Mammary epithelial cell (primary cell): ENCODE measurements at regions of chr9 and their contacts with region 1.

Region 1: DNA sequence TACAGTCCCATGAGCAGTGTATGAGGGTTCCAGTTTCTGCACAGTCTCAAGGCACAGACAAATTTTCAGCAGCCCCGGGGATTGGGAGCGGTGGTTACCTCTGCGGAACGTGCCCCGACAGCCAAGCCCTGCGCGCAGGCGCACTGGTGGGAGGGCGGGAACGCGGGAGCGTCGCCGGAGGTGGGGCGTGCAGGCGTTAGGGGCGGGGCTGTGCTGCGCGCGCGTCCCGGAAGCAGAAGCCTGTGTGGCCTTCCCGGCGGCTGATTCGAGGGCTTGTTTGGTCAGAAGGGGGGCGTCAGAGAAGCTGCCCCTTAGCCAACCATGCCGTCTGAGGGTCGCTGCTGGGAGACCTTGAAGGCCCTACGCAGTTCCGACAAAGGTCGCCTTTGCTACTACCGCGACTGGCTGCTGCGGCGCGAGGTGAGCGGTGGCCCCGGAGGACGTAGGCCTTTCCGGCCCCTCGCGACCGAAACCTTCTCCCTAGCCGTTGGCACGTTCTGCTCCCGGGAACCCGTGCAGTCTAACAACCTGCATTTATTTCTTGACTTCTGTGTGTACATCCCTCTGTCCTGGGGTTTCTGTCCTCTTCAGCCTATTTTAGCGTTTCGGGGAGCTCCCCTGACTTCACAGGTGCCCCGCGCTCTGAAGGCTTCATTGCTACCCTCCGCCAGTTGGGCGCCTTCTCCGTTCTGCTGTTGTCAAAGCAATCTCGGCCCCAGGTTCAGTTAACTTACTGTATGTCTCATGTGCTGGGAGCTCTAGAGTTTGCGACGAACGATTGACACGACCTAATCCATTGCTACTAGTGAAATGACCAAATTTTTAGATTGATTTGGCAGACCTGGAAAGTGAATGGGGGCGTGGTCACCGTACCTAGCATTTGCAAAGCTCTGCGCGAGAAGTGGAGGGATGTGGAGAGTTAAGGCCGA is at the start of gene GLE1:
- DNase-seq: peak; percentile 90
- H3K4me3 ChIP-seq: peak within 1 kb of the TSS; percentile 86 to 95 (median 91)
- H3K27ac ChIP-seq: peak within 1 kb of the TSS; percentile 83
- H3K4me1 ChIP-seq: peaks cover 27% of the 10 kb centered on the region
- H3K27me3 ChIP-seq: no peaks in the 10 kb centered on the region
- CTCF ChIP-seq: no peak
- total RNA-seq, gene GLE1: 19.7 to 28.8 TPM

Region 2: DNA sequence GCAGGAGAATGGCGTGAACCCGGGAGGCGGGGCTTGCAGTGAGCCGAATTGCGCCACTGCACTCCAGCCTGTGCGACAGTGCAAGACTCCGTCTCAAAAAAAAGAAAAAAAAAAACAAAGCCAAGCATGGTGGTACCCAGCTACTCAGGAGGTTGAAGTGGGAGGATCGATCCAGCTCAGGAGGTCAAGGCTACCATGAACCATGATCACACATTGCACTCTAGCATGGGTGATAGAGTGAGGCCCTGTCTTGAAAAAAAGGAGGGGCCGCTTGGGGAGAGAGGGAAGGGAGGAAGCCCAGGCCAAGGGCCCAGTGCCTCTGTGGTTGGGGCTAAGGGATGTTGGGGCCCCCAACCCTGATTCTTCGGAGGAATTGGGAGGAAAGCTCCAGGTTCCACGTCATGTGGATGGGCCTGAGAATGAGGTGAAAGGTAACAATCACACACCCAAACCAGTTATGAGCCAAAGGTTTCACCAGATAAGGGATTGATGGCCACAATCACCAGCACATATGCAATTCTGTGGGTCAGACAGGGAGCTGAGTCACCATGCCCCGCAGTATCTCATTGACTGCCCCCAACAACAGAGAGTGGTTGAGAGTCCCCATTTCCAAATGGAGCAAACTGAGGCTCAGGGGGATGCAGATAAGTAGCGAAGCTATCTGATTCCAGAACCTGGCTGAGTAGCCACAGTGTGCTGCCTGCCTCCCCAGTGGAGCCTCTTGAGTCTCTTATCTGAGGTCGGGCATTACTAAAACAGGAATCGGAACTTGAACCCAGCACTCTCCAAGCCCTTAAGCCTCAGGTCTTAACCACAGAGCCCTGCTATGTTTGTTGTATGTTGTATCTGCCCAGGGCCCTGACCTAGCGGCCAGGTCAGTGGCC is 208.2 kb before region 1 on chr9:
- CTCF ChIA-PET with region 1: no interaction called
- dilution Hi-C with region 1: no loop called
- in situ Hi-C with region 1: no loop called
- intact Hi-C with region 1: loop called (anchors 10 kb)
- DNase-seq: no peak
- H3K4me3 ChIP-seq: no peak overlapping the region
- H3K27ac ChIP-seq: no peak overlapping the region
- H3K4me1 ChIP-seq: no peaks in the 10 kb centered on the region
- H3K27me3 ChIP-seq: no peaks in the 10 kb centered on the region
- CTCF ChIP-seq: no peak

Region 3: GRCh38 chr9:128361986-128362646 is 142.6 kb before region 1 on chr9:
- CTCF ChIA-PET with region 1: no interaction called
- dilution Hi-C with region 1: no loop called
- in situ Hi-C with region 1: no loop called
- intact Hi-C with region 1: loop called (anchors 1 kb)
- DNase-seq: peak; percentile 72
- H3K4me3 ChIP-seq: peak overlapping the region in 2 of 3 experiments; percentile 26 to 56
- H3K27ac ChIP-seq: no peak overlapping the region
- H3K4me1 ChIP-seq: peaks cover 25% of the 10 kb centered on the region
- H3K27me3 ChIP-seq: no peaks in the 10 kb centered on the region
- CTCF ChIP-seq: peak; percentile 87 to 91

Region 4: DNA sequence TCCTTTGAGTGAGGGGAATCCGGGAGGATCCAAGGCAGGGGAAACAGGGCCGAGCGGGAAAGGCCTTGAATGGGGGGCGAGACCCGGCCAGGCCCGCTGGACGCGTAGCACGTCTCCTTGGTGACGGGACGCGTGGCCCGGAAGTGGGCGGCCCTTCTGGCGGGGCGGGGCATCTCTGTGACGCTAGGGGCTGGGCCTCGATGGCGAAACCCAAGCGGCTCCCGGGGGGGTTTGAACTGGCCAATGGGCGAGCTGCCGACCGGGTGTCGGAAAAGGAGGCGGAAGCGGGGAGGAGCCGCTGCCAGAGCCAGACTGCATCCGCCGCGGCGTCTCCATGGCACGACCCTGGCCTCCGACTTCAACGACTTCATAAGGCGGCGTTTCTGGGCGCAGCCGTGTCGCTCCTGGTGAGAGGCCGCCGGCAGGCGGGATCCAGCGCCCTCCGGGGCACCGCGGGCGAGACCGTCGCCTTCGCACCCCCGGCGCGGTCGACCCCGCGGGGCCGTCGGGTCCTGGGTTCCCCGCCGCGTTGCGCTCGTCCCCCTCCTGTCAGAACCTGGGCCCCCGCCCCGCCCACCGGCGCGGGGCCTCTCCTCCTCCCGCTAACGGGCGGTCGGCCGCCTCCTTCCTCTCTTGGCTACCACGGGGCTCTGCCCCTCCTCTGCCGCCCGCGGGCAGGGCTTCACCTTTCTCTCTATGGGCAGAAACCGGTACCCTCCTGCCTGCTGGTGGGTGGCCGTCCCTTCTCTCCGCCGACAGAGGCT is 48.7 kb before region 1 on chr9 and contains the start of gene ODF2:
- CTCF ChIA-PET with region 1: no interaction called
- dilution Hi-C with region 1: no loop called
- in situ Hi-C with region 1: no loop called
- intact Hi-C with region 1: loop called (anchors 2 kb)
- DNase-seq: peak; percentile 93
- H3K4me3 ChIP-seq: peak within 1 kb of the TSS; percentile 80 to 90 (median 86)
- H3K27ac ChIP-seq: peak within 1 kb of the TSS; percentile 80
- H3K4me1 ChIP-seq: peaks cover 5% of the 10 kb centered on the region
- H3K27me3 ChIP-seq: no peaks in the 10 kb centered on the region
- CTCF ChIP-seq: no peak
- total RNA-seq, gene ODF2: 20.5 to 36.5 TPM

Region 5: DNA sequence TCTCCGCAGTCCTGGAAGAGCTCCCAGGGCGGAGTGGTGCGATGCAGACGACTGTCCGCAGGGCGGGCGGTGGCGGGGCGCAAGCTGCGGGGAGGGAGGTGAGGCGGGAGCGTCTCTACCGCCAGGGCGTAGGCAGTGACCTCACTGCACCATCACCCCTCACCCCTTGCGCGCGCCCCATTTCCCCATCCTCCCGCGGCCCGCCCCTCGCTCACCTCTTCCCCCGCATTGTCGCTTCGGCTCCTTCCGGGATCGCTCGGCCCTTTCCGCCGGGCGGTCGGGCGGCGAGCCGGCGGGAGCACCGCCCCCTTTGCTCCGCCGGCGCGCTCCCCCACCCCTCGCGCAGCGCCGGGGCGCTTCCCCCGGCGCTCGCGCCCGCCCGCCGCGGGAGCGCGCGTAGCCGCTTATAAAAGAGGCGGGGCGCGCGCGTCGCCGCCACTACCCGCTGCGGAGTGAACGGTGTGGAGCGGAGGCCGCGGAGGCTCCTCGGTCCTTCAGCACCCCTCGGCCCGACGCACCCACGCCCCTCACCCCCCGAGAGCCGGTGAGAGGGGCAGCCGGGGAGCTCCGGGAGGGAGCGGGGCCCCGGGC is 47.5 kb after region 1 on chr9 and contains the start of gene SPTAN1:
- CTCF ChIA-PET with region 1: no interaction called
- dilution Hi-C with region 1: no loop called
- in situ Hi-C with region 1: no loop called
- intact Hi-C with region 1: loop called (anchors 1 kb)
- DNase-seq: peak; percentile 90
- H3K4me3 ChIP-seq: peak within 1 kb of the TSS; percentile 66 to 88 (median 88)
- H3K27ac ChIP-seq: peak within 1 kb of the TSS; percentile 90
- H3K4me1 ChIP-seq: peaks cover 54% of the 10 kb centered on the region
- H3K27me3 ChIP-seq: no peaks in the 10 kb centered on the region
- CTCF ChIP-seq: no peak
- total RNA-seq, gene SPTAN1: 257 to 307 TPM